ENCODE measurements at regions of chr4 and their contacts with region 1.

Region 1: GRCh38 chr4:71020611-71021010 is 27.2 kb downstream of the DCK start:
- DNase-seq: no peak
- ATAC-seq: no peak
- H3K4me3 ChIP-seq: no peak overlapping the region
- H3K27ac ChIP-seq: no peak overlapping the region
- H3K4me1 ChIP-seq: peaks cover 7% of the 10 kb centered on the region
- CTCF ChIP-seq: no peak
- EP300 ChIP-seq: no peak
- POLR2A ChIP-seq: no peak
- RAD21 ChIP-seq: no peak

Region 2: DNA sequence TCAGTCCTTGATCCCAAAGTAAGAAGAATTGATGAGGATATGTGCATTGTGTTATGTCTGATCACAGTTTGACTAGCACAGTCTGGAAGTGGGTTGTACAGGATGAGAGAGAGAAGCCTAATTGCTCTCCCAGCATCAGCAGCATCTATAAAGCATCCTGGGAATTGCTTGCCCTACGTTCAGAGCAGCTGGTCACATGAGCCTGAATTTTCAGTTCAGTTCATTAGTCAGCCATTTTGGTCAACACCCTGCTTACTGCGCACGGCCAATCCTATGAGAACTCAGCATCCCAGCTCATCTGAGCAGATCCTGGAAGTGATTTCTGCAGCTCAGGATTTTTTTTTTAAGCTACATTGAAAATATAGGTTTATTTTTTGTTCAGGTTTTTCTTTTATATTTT is 298.9 kb before region 1 on chr4 and contains the start of gene RUFY3:
- CTCF ChIA-PET with region 1: no interaction called
- POLR2A ChIA-PET with region 1: no interaction called
- DNase-seq: no peak
- ATAC-seq: peak; percentile 59 to 65; a peak in 5 of 6 replicates
- H3K4me3 ChIP-seq: no peak within 1 kb of the TSS
- H3K27ac ChIP-seq: 0 out of 6 replicates have a peak within 1 kb of the TSS, but pooled peaks of 1 of the 2 experiments have one; percentile 32
- H3K4me1 ChIP-seq: peaks cover 12% of the 10 kb centered on the region
- CTCF ChIP-seq: no peak
- EP300 ChIP-seq: no peak
- POLR2A ChIP-seq: no peak
- RAD21 ChIP-seq: no peak
- polyA plus RNA-seq, gene RUFY3: 17.7 and 20.8 TPM in 2 replicates

Region 3: GRCh38 chr4:71009890-71010588 is 10.6 kb before region 1 on chr4:
- CTCF ChIA-PET with region 1: interaction called, 14 read pairs
- POLR2A ChIA-PET with region 1: interaction called, 3 read pairs
- DNase-seq: peak; percentile 26
- ATAC-seq: peak; percentile 54 to 73; a peak in 3 of 6 replicates
- H3K4me3 ChIP-seq: no peak overlapping the region
- H3K27ac ChIP-seq: no peak overlapping the region
- H3K4me1 ChIP-seq: peaks cover 8% of the 10 kb centered on the region; the same call in 2 of the 3 replicates
- CTCF ChIP-seq: peak; percentile 59
- EP300 ChIP-seq: no peak
- POLR2A ChIP-seq: no peak
- RAD21 ChIP-seq: peak; percentile 25 to 39; a peak in 3 of 5 replicates

Region 4: GRCh38 chr4:72208421-72209075 is 1187.9 kb after region 1 on chr4:
- CTCF ChIA-PET with region 1: no interaction called
- POLR2A ChIA-PET with region 1: no interaction called
- DNase-seq: no peak
- ATAC-seq: no peak
- H3K4me3 ChIP-seq: no peak overlapping the region
- H3K27ac ChIP-seq: no peak overlapping the region
- H3K4me1 ChIP-seq: no peaks in the 10 kb centered on the region
- CTCF ChIP-seq: no peak
- EP300 ChIP-seq: no peak
- POLR2A ChIP-seq: no peak
- RAD21 ChIP-seq: no peak